ENCODE measurements at regions of chr6 and their contacts with region 1.

Region 1: GRCh38 chr6:84774157-84774984 is 10.0 kb upstream of the TBX18 start:
- H3K4me3 ChIP-seq: peak overlapping the region; percentile 58
- H3K27ac ChIP-seq: peak overlapping the region; percentile 86
- H3K4me1 ChIP-seq: peaks cover 3% of the 10 kb centered on the region; the same call in 1 of the 2 replicates
- CTCF ChIP-seq: peak; percentile 78

Region 2: GRCh38 chr6:84791233-84791632 is 16.9 kb after region 1 on chr6:
- CTCF ChIA-PET with region 1: interaction called, 10 read pairs
- POLR2A ChIA-PET with region 1: no interaction called
- H3K4me3 ChIP-seq: no peak overlapping the region
- H3K27ac ChIP-seq: no peak overlapping the region
- H3K4me1 ChIP-seq: no peaks in the 10 kb centered on the region
- CTCF ChIP-seq: no peak

Region 3: GRCh38 chr6:84973606-84974005 is 199.2 kb after region 1 on chr6:
- CTCF ChIA-PET with region 1: no interaction called
- POLR2A ChIA-PET with region 1: no interaction called
- H3K4me3 ChIP-seq: no peak overlapping the region
- H3K27ac ChIP-seq: no peak overlapping the region
- H3K4me1 ChIP-seq: peaks cover 5% of the 10 kb centered on the region; the same call in 1 of the 2 replicates
- CTCF ChIP-seq: no peak

Region 4: GRCh38 chr6:85354761-85355618 is 580.6 kb after region 1 on chr6:
- CTCF ChIA-PET with region 1: no interaction called
- POLR2A ChIA-PET with region 1: no interaction called
- H3K4me3 ChIP-seq: no peak overlapping the region
- H3K27ac ChIP-seq: no peak overlapping the region
- H3K4me1 ChIP-seq: no peaks in the 10 kb centered on the region
- CTCF ChIP-seq: peak; percentile 74

Measured in HEK293 (cell line).